Activated B cell treated with CpG ODN at 0.5 μM for 24 hours (primary cell): ENCODE measurements at regions of chr6 and their contacts with region 1.

Region 1: DNA sequence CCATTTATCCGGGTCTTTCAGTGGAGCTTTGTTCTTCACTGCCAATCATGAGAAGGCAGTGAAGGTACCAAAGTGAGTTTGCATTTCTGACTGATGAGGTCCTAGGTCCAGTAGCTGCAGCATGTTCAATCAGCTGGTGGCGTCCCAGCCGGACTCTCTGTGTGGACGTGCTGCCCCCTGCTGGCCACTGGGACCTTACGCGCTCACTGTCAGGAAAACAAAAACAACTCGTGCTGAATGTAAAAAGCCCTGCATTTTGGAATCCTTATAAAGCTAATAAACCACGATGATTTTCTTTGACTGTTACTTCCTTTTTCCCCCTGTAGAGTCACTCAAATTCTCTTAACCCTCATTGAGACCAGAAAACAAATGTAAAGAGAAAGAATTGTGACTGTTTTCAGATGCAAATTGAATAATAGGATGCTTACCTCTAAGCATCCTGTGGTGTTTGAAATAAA is 4.9 kb upstream of the CD24 start:
- DNase-seq: peak; percentile 79
- ATAC-seq: peak; percentile 32
- H3K4me3 Mint-ChIP-seq: no peak overlapping the region
- H3K27ac Mint-ChIP-seq: no peak overlapping the region
- H3K4me1 Mint-ChIP-seq: peaks cover 19% of the 10 kb centered on the region
- H3K27me3 Mint-ChIP-seq: no peaks in the 10 kb centered on the region
- CTCF ChIP-seq: peak; percentile 28

Region 2: GRCh38 chr6:106097411-106098231 is 881.8 kb before region 1 on chr6:
- CTCF ChIA-PET with region 1: no interaction called
- POLR2A ChIA-PET with region 1: no interaction called
- intact Hi-C with region 1: loop called (anchors 10 kb)
- DNase-seq: no peak
- ATAC-seq: peak; percentile 74
- H3K4me3 Mint-ChIP-seq: peak overlapping the region; percentile 89
- H3K27ac Mint-ChIP-seq: peak overlapping the region; percentile 94
- H3K4me1 Mint-ChIP-seq: peaks cover 84% of the 10 kb centered on the region
- H3K27me3 Mint-ChIP-seq: no peaks in the 10 kb centered on the region
- CTCF ChIP-seq: no peak

Region 3: DNA sequence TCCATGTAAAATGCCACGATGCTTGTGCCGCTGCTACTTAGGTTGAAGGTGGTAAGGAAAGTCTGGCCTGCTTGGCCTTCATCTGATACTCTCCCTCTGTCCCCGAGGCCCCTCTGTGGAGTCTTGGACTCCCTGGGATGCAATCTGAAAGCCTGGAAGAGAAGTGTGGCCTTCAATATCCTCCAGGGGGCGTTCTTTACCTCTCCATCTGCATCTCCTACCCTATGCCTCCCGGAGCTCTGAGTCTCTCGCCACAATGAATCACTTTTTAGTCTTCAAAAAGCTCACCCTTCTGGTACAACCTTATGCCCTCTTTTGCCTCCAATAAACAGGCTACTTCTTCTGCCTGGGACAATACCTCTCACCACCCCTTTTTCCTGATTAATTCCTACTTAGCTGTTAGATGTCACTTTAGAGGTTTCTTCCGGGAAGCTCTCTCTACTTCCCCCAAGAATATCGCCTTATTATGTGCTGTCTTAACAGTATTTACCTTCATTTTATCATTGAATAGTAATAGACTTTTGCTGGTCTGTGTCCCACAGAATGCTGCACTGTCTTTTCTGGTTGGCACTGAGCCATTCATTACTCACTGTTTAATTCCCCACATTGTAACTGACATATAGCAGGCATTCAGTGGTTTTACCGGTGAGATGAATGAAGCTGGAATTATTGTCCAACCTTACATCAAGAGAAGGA is 640.0 kb before region 1 on chr6:
- CTCF ChIA-PET with region 1: interaction called, 8 read pairs
- POLR2A ChIA-PET with region 1: no interaction called
- intact Hi-C with region 1: loop called (anchors 1 kb)
- DNase-seq: no peak
- ATAC-seq: peak; percentile 79
- H3K4me3 Mint-ChIP-seq: peak overlapping the region; percentile 59
- H3K27ac Mint-ChIP-seq: no peak overlapping the region
- H3K4me1 Mint-ChIP-seq: peaks cover 7% of the 10 kb centered on the region
- H3K27me3 Mint-ChIP-seq: peaks cover 17% of the 10 kb centered on the region
- CTCF ChIP-seq: no peak

Region 4: GRCh38 chr6:106556368-106556960 is 423.0 kb before region 1 on chr6:
- CTCF ChIA-PET with region 1: interaction called, 10 read pairs
- POLR2A ChIA-PET with region 1: no interaction called
- intact Hi-C with region 1: no loop called
- DNase-seq: no peak
- ATAC-seq: peak; percentile 31
- H3K4me3 Mint-ChIP-seq: no peak overlapping the region
- H3K27ac Mint-ChIP-seq: peak overlapping the region; percentile 13
- H3K4me1 Mint-ChIP-seq: peaks cover 22% of the 10 kb centered on the region
- H3K27me3 Mint-ChIP-seq: no peaks in the 10 kb centered on the region
- CTCF ChIP-seq: no peak

Region 5: DNA sequence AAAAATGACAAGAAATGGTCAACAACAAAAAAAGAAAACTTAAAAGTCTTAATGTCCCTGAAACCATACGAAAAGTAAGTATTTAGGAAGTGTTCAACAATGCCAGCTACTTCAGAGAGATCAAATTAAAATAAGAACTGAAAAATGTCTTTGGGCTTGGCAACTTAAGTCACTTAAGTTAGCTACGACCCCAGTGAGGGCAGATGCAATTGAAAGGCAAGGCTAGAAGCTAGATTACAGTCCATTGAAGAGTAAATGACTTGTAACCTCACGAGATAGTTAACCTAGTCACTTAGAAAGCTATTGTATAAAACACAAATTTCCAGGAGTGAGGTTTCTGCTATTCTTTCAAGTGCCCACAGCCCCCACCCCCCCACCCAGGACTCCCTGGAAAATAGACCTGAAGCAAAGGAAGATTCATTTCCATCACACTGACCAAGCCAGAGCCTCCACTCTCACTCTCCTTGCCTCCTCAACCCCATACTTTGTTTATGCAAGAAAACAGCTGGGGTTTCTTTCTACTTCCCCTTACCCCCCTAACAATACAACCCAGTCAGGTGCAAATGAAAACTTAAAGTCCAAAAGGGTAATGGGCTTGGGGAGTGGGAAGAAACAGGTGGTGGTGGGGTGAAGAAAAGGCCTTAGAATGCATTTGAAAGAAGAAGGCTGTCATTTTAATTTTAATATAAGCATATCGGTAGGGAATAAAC is 364.7 kb before region 1 on chr6:
- CTCF ChIA-PET with region 1: interaction called, 95 read pairs
- POLR2A ChIA-PET with region 1: interaction called, 6 read pairs
- intact Hi-C with region 1: no loop called
- DNase-seq: no peak
- ATAC-seq: peak; percentile 37
- H3K4me3 Mint-ChIP-seq: peak overlapping the region; percentile 19
- H3K27ac Mint-ChIP-seq: peak overlapping the region; percentile 77
- H3K4me1 Mint-ChIP-seq: peaks cover 55% of the 10 kb centered on the region
- H3K27me3 Mint-ChIP-seq: no peaks in the 10 kb centered on the region
- CTCF ChIP-seq: no peak

Region 6: GRCh38 chr6:106844930-106845329 is 134.5 kb before region 1 on chr6:
- CTCF ChIA-PET with region 1: interaction called, 4 read pairs
- POLR2A ChIA-PET with region 1: no interaction called
- intact Hi-C with region 1: loop called (anchors 1 kb)
- DNase-seq: no peak
- ATAC-seq: peak; percentile 58
- H3K4me3 Mint-ChIP-seq: peak overlapping the region; percentile 41
- H3K27ac Mint-ChIP-seq: peak overlapping the region; percentile 72
- H3K4me1 Mint-ChIP-seq: peaks cover 57% of the 10 kb centered on the region
- H3K27me3 Mint-ChIP-seq: no peaks in the 10 kb centered on the region
- CTCF ChIP-seq: no peak